Upper lobe of right lung (tissue), 1 donor: ENCODE measurements at regions of chr7 and their contacts with region 1.

Region 1: DNA sequence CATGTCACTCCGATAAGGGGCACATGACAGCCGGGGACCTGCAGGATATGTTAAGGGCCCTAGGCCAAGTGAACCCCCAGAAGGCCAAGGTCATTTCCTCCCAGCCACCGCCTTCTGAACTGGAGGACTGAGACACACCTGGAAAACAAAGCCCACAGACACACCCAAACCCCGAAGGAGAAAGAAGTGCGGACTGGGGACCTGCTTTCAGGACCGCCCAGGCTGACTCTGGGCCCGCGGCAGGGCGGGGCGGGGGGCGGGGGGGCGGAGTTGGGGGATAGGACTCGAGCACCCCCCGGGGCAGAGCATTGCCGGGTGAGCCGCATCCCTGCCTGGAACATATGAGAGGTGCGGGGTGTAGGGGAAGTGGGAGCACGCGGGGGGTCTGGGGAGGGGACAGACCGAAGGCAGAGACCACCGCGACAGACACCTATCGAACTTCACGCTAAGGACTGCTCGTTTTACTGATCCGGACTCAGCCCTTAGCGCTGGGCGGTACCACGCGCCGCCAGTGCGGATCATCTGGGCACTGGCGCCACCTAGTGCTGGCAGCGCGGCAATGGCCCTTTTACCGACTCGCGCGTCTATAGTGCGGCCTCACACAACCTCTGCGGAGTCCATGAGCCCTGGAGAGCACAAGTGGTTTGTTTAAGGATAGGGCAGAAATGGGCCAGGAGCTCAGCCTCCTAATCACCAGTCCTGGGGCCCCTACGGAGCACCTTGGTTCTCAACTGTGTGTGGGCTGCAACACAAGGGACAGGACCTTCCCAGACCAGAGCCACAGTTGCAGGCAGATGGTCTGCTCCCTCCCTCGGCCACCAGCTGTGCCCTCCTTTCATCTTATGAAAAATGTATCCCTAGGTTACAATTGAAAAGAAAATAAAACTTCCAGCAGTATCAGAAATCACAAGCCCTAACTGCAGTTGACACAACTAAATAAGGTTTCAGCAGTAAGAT is 157.6 kb downstream of the HERPUD2 start:
- DNase-seq: peak; percentile 89
- ATAC-seq: peak; percentile 99
- H3K4me3 ChIP-seq: peak overlapping the region; percentile 45
- H3K27ac ChIP-seq: no peak overlapping the region
- H3K4me1 ChIP-seq: peaks cover 5% of the 10 kb centered on the region
- H3K27me3 ChIP-seq: no peaks in the 10 kb centered on the region
- CTCF ChIP-seq: peak; percentile 93

Region 2: DNA sequence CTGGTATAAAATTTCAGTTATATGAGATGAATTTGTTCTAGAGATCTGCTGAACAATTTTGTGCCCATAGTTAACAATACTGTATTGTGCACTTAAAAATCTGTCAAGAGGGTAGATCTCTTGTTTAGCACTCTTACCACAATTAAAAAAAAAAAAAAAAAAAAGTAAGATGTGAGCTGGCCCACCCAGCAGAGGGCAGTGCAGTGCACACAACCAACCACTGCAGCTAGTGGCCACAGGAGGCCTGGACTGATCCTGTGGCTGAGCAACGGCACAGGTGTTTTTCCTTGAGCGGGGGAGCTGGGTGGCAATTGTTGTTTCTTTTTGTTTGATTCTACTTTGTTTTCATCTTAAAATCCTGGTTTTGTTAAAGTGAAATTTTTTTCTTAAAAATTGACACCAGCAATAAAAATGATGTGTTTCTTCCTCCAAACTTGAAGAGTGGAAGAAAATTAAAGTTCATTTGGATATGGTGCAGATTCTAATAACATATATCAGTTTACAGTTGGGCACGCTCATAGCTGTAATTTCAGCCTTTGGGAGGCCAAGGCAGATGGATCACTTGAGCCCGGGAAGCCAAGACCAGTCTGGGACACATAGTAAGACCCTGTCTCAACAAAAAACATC is 112.4 kb before region 1 on chr7:
- intact Hi-C with region 1: loop called (anchors 10 kb)
- DNase-seq: peak; percentile 74
- ATAC-seq: peak; percentile 93
- H3K4me3 ChIP-seq: no peak overlapping the region
- H3K27ac ChIP-seq: no peak overlapping the region
- H3K4me1 ChIP-seq: no peaks in the 10 kb centered on the region
- H3K27me3 ChIP-seq: no peaks in the 10 kb centered on the region
- CTCF ChIP-seq: peak; percentile 66

Region 3: DNA sequence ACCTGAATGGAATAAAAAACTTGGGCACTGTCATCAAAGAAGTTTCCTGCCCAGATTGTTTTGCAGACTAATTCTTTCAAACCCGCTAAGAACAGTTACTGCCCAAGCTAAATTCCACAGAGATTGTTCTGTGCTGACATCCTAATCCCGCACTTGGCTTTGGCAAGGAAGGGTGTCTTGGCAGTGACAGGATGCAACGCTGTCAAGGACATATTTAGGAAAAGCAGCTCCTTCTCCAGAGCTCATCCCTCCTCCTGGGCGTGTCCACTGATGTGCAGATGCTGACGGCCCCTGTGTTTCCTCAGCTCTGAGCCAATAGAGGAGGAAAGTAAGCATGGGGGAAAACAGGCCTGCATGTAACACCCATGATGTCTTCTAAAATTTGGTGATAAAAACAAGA is 689.9 kb after region 1 on chr7:
- intact Hi-C with region 1: no loop called
- DNase-seq: no peak
- ATAC-seq: peak; percentile 67
- H3K4me3 ChIP-seq: no peak overlapping the region
- H3K27ac ChIP-seq: no peak overlapping the region
- H3K4me1 ChIP-seq: peaks cover 11% of the 10 kb centered on the region
- H3K27me3 ChIP-seq: no peaks in the 10 kb centered on the region
- CTCF ChIP-seq: no peak